Natural killer cell (primary cell): ENCODE measurements at regions of chr11 and their contacts with region 1.

Region 1: DNA sequence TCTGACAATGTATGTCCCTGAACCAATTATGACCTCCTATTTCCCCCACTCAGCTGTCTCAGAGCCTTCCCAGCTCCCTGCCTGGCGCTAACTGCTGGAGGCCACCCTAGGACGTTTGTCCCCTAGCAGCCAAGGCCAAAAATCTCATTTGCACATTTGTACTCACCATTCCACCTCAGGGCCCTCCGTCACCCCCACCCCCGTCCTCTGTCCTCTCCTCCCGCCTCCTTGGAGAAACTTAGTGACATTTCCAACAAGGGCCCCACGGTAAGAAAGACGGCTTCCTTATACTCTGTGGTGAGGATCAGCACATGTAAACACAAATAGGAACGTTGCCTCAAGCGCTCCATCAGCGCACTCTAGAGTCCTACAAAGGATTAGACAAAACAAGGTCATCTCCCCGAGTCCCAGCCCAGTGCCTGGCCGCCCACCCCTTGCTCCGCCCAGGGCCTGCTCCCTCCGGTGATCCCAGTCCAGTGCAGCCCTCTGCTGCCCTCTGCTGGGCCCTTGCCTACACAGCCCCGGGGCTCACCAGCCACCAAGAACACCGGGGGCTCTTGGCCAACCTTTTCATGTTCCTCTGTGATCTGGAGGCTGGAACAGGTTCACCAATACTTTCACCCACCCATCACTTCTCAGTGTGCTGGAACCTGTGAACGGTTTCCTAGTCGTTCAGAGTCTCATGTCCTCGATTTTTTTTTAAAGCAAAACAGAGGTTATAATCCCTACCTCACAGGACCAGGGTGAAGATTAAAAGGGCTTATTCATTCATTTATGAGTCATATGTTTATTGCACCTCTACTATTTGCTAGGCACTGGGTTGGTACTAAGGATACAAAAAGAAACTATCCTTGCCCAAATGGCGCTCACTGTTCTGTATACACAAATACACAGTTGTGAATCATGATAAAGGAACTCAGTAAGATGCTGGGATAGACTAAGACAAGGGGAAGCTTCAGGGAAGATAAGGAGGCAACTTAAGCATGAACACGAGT is 15.3 kb upstream of the CTR9 start:
- DNase-seq: peak; percentile 88 to 91
- ATAC-seq: peak; percentile 100
- H3K4me3 ChIP-seq: no peak overlapping the region
- H3K4me3 Mint-ChIP-seq: peak overlapping the region; percentile 40
- H3K27ac ChIP-seq: no peak overlapping the region
- H3K27ac Mint-ChIP-seq: peak overlapping the region in 1 of 2 donors; percentile 81
- H3K4me1 ChIP-seq: peaks cover 7% of the 10 kb centered on the region
- H3K4me1 Mint-ChIP-seq: peaks cover 6 to 12% of the 10 kb centered on the region in 2 donors
- H3K27me3 ChIP-seq: no peaks in the 10 kb centered on the region
- H3K27me3 Mint-ChIP-seq: peaks cover 10 to 12% of the 10 kb centered on the region in 2 donors
- CTCF ChIP-seq: peak; percentile 98

Region 2: GRCh38 chr11:10208131-10208575 is 527.6 kb before region 1 on chr11:
- intact Hi-C with region 1: loop called (anchors 5 kb)
- DNase-seq: peak in 1 of 2 donors; percentile 73
- ATAC-seq: peak; percentile 58 to 74 (median 68)
- H3K4me3 ChIP-seq: no peak overlapping the region
- H3K4me3 Mint-ChIP-seq: no peak overlapping the region
- H3K27ac ChIP-seq: no peak overlapping the region
- H3K27ac Mint-ChIP-seq: no peak overlapping the region
- H3K4me1 ChIP-seq: no peaks in the 10 kb centered on the region
- H3K4me1 Mint-ChIP-seq: no peaks in the 10 kb centered on the region
- H3K27me3 ChIP-seq: no peaks in the 10 kb centered on the region
- H3K27me3 Mint-ChIP-seq: no peaks in the 10 kb centered on the region
- CTCF ChIP-seq: peak; percentile 77

Region 3: DNA sequence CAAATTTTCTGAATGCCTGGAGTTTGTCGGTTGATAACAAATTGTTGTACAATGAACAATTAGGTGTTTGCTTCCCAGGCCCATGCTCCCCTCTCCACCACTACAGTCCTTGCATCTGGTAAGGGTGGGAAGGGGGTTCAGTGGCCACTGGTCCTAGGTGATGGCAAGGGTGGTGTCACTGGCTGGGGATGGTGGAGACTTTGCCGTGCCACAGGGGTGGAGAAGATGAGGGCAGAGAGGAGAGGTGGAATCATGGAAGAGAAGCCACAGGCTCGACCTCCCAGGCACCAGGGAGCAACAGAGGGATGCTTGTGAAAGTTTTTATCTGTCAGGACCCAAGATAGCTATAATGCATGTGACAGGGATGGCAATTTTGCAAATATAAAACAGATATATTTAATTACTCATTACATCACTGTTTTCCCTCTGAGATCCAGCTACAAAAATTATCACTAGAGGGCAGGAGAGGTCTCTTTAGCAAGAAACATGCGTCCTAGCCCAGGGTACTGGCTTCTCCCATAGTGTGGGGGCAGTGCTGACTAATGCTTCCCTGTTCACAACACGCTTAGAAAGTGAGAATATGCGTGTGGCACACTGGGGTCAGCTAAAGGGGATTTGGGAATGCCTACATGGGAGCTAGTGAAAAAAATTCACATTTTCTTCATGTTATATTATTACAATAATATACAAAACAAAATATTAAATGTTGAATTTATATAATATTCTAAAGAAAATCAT is 329.8 kb before region 1 on chr11:
- intact Hi-C with region 1: loop called (anchors 1 kb)
- DNase-seq: peak in 1 of 2 donors; percentile 76
- ATAC-seq: peak; percentile 63 to 90 (median 89)
- H3K4me3 ChIP-seq: no peak overlapping the region
- H3K4me3 Mint-ChIP-seq: no peak overlapping the region
- H3K27ac ChIP-seq: no peak overlapping the region
- H3K27ac Mint-ChIP-seq: no peak overlapping the region
- H3K4me1 ChIP-seq: peaks cover 26% of the 10 kb centered on the region
- H3K4me1 Mint-ChIP-seq: peaks cover 41 to 44% of the 10 kb centered on the region in 2 donors
- H3K27me3 ChIP-seq: no peaks in the 10 kb centered on the region
- H3K27me3 Mint-ChIP-seq: no peaks in the 10 kb centered on the region
- CTCF ChIP-seq: peak; percentile 71

Region 4: GRCh38 chr11:10413268-10413667 is 322.5 kb before region 1 on chr11:
- intact Hi-C with region 1: loop called (anchors 2 kb)
- DNase-seq: peak in 1 of 2 donors; percentile 80
- ATAC-seq: peak; percentile 70 to 81 (median 80)
- H3K4me3 ChIP-seq: no peak overlapping the region
- H3K4me3 Mint-ChIP-seq: peak overlapping the region; percentile 83
- H3K27ac ChIP-seq: no peak overlapping the region
- H3K27ac Mint-ChIP-seq: peak overlapping the region in 1 of 2 donors; percentile 47
- H3K4me1 ChIP-seq: peaks cover 44% of the 10 kb centered on the region
- H3K4me1 Mint-ChIP-seq: peaks cover 60 to 66% of the 10 kb centered on the region in 2 donors
- H3K27me3 ChIP-seq: no peaks in the 10 kb centered on the region
- H3K27me3 Mint-ChIP-seq: peaks cover 3 to 13% of the 10 kb centered on the region in 2 donors
- CTCF ChIP-seq: peak; percentile 40

Region 5: DNA sequence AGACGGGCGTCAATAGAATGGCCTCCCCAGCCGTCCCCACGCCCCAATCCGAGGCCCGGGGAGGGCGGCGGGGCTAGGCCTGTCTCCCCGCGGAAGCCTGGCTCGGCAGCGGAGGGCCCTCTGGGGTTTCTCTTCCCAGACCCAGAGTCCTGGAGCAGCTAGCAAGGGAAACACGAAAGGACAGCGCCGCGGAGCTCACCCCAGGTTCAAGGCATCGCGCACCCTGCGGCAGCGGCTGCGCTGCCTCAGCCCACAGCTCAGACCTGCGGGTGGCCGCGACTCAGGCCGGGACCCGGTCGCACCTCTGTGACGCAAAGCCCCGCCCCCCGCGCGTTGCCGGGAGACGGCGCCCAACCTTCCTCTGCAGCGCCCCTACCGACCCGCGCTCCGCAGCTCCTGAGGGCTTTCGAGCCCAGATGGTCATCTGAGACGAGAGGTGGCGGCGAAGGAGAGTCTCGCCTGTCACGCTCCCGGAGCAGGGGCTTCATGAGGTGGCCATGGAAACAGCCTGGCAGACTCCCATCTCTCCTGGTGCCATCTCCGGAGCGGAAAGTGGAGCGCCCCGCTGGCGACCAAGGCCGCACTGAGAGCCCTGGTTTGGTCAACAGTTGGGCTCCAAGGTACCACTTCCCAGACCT is 194.7 kb before region 1 on chr11 and contains the start of gene RNF141:
- intact Hi-C with region 1: loop called (anchors 5 kb)
- DNase-seq: peak; percentile 95 to 98
- ATAC-seq: peak; percentile 97 to 99 (median 98)
- H3K4me3 ChIP-seq: peak within 1 kb of the TSS; percentile 78
- H3K4me3 Mint-ChIP-seq: peak within 1 kb of the TSS; percentile 92
- H3K27ac ChIP-seq: peak within 1 kb of the TSS; percentile 84
- H3K27ac Mint-ChIP-seq: peak within 1 kb of the TSS; percentile 87 to 89
- H3K4me1 ChIP-seq: peaks cover 14% of the 10 kb centered on the region
- H3K4me1 Mint-ChIP-seq: peaks cover 18% of the 10 kb centered on the region in 2 donors
- H3K27me3 ChIP-seq: no peaks in the 10 kb centered on the region
- H3K27me3 Mint-ChIP-seq: peaks cover 2 to 7% of the 10 kb centered on the region in 2 donors
- CTCF ChIP-seq: peak; percentile 88
- total RNA-seq, gene RNF141: 10.3 to 13.9 (median 11.7) TPM

Region 6: DNA sequence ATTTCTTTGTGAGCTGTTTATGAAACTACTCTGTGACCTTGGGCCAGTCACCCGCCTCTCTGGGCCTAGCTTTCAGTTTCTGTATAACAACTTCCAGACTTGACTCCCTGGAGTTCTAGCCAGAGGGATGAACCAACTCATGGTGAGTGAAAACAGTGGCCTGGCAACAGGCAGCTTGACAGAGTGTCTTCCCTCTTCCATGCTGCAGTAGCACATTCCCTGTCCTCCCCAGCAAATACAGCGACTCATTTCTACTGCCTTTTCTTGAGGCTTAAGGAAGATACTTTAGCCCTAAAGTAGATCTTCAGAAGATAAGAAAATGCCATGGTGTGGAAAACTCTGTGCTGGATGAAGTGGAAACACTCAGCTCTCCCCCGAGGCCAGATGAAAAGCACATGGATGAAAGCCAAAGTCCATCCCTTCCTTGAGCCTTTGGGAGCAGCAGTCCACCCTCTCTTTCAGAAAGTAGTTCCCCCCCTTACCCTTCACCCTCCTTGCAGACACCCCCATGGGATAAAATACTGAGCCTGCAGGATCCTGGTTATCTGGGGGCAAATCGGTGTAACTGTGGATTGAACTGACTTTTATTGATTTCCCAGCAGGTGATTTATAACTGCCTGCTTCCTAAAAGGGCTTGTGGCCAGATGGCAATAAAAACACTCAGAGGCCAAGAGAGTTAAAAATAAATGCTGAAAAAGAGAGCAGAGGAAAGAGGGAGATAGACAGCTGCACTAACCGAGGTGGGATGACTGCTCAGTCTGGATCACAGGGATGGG is 66.3 kb before region 1 on chr11:
- intact Hi-C with region 1: no loop called
- DNase-seq: no peak
- ATAC-seq: no peak
- H3K4me3 ChIP-seq: no peak overlapping the region
- H3K4me3 Mint-ChIP-seq: no peak overlapping the region
- H3K27ac ChIP-seq: no peak overlapping the region
- H3K27ac Mint-ChIP-seq: no peak overlapping the region
- H3K4me1 ChIP-seq: peaks cover 3% of the 10 kb centered on the region
- H3K4me1 Mint-ChIP-seq: no peaks in the 10 kb centered on the region
- H3K27me3 ChIP-seq: peaks cover 2% of the 10 kb centered on the region
- H3K27me3 Mint-ChIP-seq: peaks cover 19 to 28% of the 10 kb centered on the region in 2 donors
- CTCF ChIP-seq: no peak